OCI-LY7 (cell line): ENCODE measurements at regions of chr1 and their contacts with region 1.

Region 1: GRCh38 chr1:244409701-244410100 is 42.0 kb downstream of the ADSS2 start:
- DNase-seq: no peak
- H3K4me3 ChIP-seq: no peak overlapping the region
- H3K27ac ChIP-seq: no peak overlapping the region
- H3K4me1 ChIP-seq: no peaks in the 10 kb centered on the region
- CTCF ChIP-seq: no peak

Region 2: DNA sequence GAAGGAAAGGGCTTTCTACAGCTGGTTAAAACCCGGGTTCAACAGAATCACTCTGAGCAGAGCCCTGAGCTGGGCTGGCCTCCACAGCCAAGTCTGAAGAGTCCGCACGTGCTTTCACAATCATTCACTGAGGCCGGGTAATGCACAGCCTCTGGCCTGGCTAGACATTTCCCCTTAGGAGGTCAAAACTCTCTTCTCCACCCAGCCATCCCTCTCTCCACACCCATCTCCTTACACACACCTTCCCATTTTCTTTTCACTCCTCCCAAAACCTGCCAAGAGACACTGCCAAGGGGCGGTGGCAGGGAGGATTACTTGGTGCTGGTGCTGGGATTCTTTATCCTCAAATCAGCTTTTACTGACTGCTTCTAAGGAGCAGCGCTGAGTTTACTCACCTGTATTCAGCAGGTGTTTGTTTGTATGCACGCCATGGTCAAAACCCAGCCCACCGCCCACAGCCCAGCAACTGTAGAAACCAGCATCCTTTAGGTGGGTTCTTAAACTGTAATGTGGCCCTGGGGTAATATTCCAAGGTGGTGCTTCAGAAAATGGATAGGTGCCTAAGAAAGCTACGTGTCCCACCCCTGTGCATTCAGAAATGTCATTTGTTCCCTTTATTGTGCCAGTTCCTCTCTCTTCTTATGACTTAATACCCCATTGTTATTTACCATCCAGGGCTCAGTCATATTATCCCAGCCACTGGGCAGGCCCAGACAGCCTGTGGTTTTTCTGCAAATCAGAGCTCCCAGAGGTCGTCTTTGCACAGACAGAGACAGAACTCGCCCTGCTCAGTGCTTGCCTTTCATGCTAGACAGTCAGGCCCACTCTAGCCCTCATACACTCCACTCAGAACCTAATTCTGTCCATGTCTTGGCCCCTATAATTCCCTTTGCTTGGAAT is 38.2 kb before region 1 on chr1:
- CTCF ChIA-PET with region 1: no interaction called
- POLR2A ChIA-PET with region 1: interaction called, 13 read pairs
- intact Hi-C with region 1: no loop called
- DNase-seq: no peak
- H3K4me3 ChIP-seq: no peak overlapping the region
- H3K27ac ChIP-seq: no peak overlapping the region
- H3K4me1 ChIP-seq: no peaks in the 10 kb centered on the region
- CTCF ChIP-seq: no peak

Region 3: DNA sequence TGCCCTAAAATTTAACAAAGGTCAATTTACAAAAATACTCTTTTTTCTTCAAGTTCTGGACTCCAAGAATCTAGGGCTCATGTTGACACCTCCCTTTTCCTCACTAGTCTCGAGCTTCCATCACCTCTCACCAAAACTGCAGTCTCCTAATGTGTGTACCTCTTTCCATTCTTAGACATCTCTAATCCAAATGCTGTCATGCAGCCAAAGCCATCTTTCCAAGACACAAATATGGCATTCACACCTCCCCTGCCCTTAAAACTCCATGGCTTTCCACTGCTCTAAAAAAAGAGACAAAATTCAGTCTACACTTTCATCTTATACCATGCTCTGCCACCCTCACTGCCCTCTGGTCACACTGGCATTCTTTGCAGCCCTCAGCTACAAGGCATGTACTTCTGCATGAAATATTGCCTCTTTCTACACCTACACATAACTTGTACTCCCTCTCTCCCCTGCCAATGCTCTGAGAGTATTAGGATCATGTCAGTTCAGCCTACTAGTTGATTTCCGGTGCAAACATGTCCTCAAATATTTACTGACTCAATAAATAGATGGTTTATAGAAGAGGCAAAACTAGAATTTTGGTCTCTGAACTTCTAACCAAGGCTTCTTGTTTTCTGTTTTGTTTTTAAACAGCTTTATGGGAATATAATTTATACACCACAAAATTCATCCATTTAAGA is 15.1 kb after region 1 on chr1:
- CTCF ChIA-PET with region 1: no interaction called
- POLR2A ChIA-PET with region 1: interaction called, 12 read pairs
- intact Hi-C with region 1: no loop called
- DNase-seq: no peak
- H3K4me3 ChIP-seq: no peak overlapping the region
- H3K27ac ChIP-seq: no peak overlapping the region
- H3K4me1 ChIP-seq: no peaks in the 10 kb centered on the region
- CTCF ChIP-seq: no peak

Region 4: GRCh38 chr1:244466724-244467123 is 57.0 kb after region 1 on chr1:
- CTCF ChIA-PET with region 1: no interaction called
- POLR2A ChIA-PET with region 1: no interaction called
- intact Hi-C with region 1: no loop called
- DNase-seq: no peak
- H3K4me3 ChIP-seq: no peak overlapping the region
- H3K27ac ChIP-seq: no peak overlapping the region
- H3K4me1 ChIP-seq: no peaks in the 10 kb centered on the region
- CTCF ChIP-seq: no peak